Activated naive CD4-positive, alpha-beta T cell treated with anti-CD3 and anti-CD28 coated beads for 36 hours (primary cell): ENCODE measurements at regions of chr5 and their contacts with region 1.

Region 1: DNA sequence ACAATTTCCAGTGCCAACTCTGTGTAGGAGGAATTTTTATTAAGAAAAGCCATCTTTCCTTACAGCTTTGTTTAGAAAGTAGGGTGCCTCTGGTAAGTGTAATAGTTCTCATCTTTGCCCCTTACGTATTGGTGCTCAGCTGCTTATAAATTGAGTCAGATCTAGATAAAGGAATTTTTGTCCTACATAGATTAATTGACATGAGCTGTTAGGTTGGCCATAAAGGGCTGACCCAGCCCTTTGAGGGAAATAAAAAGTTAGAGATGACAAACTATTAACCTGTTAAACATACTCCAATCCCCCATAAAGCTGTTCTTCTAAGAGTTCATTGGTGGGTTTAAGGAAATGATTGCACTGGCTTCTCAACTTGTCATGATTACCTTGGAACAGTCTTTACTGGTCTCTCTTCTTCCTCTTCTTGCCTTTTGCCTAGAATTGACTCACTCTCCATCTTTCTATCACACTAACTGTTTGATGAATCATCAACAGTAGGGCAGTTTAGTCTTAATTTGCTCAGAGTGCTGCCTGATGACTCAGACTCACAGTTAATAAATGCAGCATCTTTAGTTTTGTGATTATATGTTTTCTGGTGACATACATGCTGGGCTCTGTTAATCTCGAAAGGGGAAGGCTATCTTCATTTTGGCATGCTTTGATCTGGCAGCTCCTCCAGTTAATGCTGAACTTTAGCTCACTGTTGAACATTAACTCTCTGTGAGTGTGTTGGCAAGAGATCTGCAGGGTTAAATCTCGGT is 51.7 kb downstream of the ARHGAP26 start:
- DNase-seq: peak; percentile 49
- H3K4me3 Mint-ChIP-seq: no peak overlapping the region
- H3K27ac Mint-ChIP-seq: peak overlapping the region; percentile 54
- H3K4me1 Mint-ChIP-seq: peaks cover 78% of the 10 kb centered on the region
- H3K27me3 Mint-ChIP-seq: no peaks in the 10 kb centered on the region

Region 2: DNA sequence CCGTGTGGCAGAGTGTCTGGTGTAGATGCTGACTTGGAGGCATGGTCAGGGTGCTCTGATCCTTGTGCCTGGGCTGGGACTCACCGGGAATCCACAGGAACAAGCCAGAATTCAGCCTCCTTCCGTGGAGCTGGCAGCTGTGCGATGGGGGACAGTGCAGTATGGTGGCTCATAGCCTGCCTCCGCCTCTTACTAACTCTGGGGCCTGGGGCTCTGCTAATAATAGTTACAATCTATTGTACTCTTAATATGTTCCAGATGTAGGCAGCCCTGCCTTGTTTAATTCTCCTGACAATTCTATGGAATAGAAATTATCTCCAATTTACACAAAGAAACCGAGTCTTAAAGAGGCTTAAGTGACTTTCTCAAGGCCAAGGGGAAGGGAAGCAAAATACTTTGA is 1021.3 kb before region 1 on chr5:
- CTCF ChIA-PET with region 1: no interaction called
- intact Hi-C with region 1: no loop called
- DNase-seq: no peak
- H3K4me3 Mint-ChIP-seq: no peak overlapping the region
- H3K27ac Mint-ChIP-seq: no peak overlapping the region
- H3K4me1 Mint-ChIP-seq: no peaks in the 10 kb centered on the region
- H3K27me3 Mint-ChIP-seq: peaks cover 18% of the 10 kb centered on the region

Region 3: GRCh38 chr5:142221091-142221860 is 600.6 kb before region 1 on chr5:
- CTCF ChIA-PET with region 1: no interaction called
- intact Hi-C with region 1: loop called (anchors 10 kb)
- DNase-seq: no peak
- H3K4me3 Mint-ChIP-seq: no peak overlapping the region
- H3K27ac Mint-ChIP-seq: no peak overlapping the region
- H3K4me1 Mint-ChIP-seq: peaks cover 32% of the 10 kb centered on the region
- H3K27me3 Mint-ChIP-seq: peaks cover 2% of the 10 kb centered on the region

Region 4: DNA sequence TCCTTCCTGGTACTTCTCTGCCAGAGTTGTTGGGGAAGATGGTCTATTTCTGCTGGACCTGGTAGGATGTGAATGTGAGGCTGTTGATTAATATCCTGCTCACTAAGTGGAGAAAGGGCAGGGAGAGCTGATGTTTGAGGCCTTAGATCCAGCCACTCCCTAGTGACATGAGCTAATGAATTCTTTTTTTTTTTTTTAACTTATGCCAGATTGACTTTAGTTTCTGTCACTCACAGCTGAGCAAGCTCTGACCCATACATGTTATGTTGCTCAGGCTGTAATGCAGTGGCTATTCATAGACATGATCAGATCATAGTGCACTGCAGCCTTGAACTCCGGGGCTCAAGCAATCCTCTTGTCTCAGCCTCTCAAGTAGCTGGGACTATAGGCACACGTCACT is 422.0 kb before region 1 on chr5:
- CTCF ChIA-PET with region 1: no interaction called
- intact Hi-C with region 1: no loop called
- DNase-seq: no peak
- H3K4me3 Mint-ChIP-seq: no peak overlapping the region
- H3K27ac Mint-ChIP-seq: no peak overlapping the region
- H3K4me1 Mint-ChIP-seq: no peaks in the 10 kb centered on the region
- H3K27me3 Mint-ChIP-seq: no peaks in the 10 kb centered on the region

Region 5: GRCh38 chr5:142726188-142726731 is 95.7 kb before region 1 on chr5:
- CTCF ChIA-PET with region 1: no interaction called
- intact Hi-C with region 1: no loop called
- DNase-seq: no peak
- H3K4me3 Mint-ChIP-seq: no peak overlapping the region
- H3K27ac Mint-ChIP-seq: no peak overlapping the region
- H3K4me1 Mint-ChIP-seq: peaks cover 8% of the 10 kb centered on the region
- H3K27me3 Mint-ChIP-seq: no peaks in the 10 kb centered on the region

Region 6: GRCh38 chr5:142769741-142770631 is 51.9 kb before region 1 on chr5 and contains the start of gene ARHGAP26:
- CTCF ChIA-PET with region 1: interaction called, 9 read pairs
- intact Hi-C with region 1: loop called (anchors 1 kb)
- DNase-seq: peak; percentile 94
- H3K4me3 Mint-ChIP-seq: peak within 1 kb of the TSS; percentile 95
- H3K27ac Mint-ChIP-seq: peak within 1 kb of the TSS; percentile 81
- H3K4me1 Mint-ChIP-seq: peaks cover 37% of the 10 kb centered on the region
- H3K27me3 Mint-ChIP-seq: no peaks in the 10 kb centered on the region
- total RNA-seq, gene ARHGAP26: 17.0 to 19.5 TPM

Region 7: GRCh38 chr5:142800776-142801494 is 21.0 kb before region 1 on chr5:
- CTCF ChIA-PET with region 1: interaction called, 5 read pairs
- intact Hi-C with region 1: loop called (anchors 1 kb)
- DNase-seq: peak; percentile 77
- H3K4me3 Mint-ChIP-seq: peak overlapping the region; percentile 64
- H3K27ac Mint-ChIP-seq: peak overlapping the region; percentile 90
- H3K4me1 Mint-ChIP-seq: peaks cover 61% of the 10 kb centered on the region
- H3K27me3 Mint-ChIP-seq: no peaks in the 10 kb centered on the region

Region 8: GRCh38 chr5:143057580-143057999 is 235.7 kb after region 1 on chr5:
- CTCF ChIA-PET with region 1: no interaction called
- intact Hi-C with region 1: loop called (anchors 5 kb)
- DNase-seq: no peak
- H3K4me3 Mint-ChIP-seq: no peak overlapping the region
- H3K27ac Mint-ChIP-seq: peak overlapping the region; percentile 92
- H3K4me1 Mint-ChIP-seq: peaks cover 63% of the 10 kb centered on the region
- H3K27me3 Mint-ChIP-seq: no peaks in the 10 kb centered on the region

Region 9: GRCh38 chr5:143153332-143154119 is 331.6 kb after region 1 on chr5:
- CTCF ChIA-PET with region 1: no interaction called
- intact Hi-C with region 1: no loop called
- DNase-seq: no peak
- H3K4me3 Mint-ChIP-seq: no peak overlapping the region
- H3K27ac Mint-ChIP-seq: no peak overlapping the region
- H3K4me1 Mint-ChIP-seq: peaks cover 3% of the 10 kb centered on the region
- H3K27me3 Mint-ChIP-seq: no peaks in the 10 kb centered on the region

Region 10: GRCh38 chr5:143435210-143435657 is 613.3 kb after region 1 on chr5:
- CTCF ChIA-PET with region 1: no interaction called
- intact Hi-C with region 1: loop called (anchors 1 kb)
- DNase-seq: peak; percentile 61
- H3K4me3 Mint-ChIP-seq: peak overlapping the region; percentile 83
- H3K27ac Mint-ChIP-seq: peak overlapping the region; percentile 97
- H3K4me1 Mint-ChIP-seq: peaks cover 68% of the 10 kb centered on the region
- H3K27me3 Mint-ChIP-seq: no peaks in the 10 kb centered on the region